ENCODE measurements at regions of chr1 and their contacts with region 1.

Region 1: DNA sequence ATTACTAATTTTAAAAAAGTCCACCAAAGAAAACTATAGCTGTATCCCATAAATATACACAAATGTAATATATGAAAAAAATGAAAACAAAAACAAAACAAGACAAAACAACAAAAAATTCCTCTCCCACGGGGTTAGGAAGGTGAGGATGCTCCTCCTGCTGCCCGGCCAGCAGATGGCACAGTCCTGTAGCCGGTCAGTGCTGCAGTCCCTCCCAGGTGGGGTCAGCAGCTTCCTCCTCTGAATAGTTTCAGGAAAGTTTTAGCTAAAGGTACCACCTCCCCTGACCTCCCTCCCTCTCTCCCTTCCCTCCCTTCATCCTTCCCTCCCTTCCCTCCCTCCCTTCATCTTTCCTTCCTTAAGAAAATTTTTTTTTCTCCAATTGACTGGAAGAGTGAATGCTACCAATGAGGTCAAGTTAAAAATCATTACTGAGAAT is 67.8 kb upstream of the BCL10 start:
- DNase-seq: peak; percentile 78
- H3K4me3 Mint-ChIP-seq: peak overlapping the region; percentile 39
- H3K27ac Mint-ChIP-seq: peak overlapping the region; percentile 96
- H3K4me1 Mint-ChIP-seq: peaks cover 79% of the 10 kb centered on the region
- H3K27me3 Mint-ChIP-seq: no peaks in the 10 kb centered on the region
- CTCF ChIP-seq: peak; percentile 75

Region 2: DNA sequence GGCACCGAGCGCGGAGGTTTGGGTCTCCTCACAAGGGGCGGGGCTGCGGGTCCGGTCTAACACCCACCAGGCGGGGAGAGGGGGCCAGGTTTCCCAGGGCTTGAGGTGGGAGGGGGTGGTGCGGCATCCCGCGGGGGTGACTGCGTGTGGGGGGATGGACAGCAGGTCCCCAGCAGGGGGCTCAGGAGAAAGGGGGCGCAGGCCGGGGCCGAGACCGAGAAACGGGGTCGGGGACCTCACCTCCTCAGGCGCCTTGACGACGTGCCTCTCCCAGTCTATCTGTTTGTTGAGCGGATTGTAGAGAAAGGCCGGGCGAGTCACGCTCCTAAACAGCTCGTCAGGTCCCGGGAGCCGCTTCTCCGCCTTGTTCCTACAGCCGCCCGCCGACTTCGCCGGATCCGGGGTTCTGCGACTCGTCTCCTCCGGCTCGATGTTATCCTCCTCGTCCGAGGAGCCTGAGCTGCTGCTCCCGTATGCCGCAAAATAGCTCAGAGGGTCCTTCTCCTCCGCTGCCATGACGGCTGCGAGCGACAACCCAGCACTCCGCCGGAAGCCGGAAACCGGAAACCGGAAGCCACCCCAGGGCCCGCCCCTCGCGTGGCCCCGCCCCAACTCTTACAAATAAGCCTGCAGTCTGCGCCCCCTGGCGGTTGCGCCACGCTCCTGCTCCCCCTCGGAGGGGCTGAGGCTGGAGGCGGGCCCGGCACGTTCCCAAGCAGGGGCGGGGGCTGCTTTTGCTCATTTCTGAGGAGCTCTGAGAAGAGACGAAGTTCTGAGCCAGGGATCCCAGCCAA is 85.0 kb before region 1 on chr1 and contains the start of gene C1orf52:
- CTCF ChIA-PET with region 1: no interaction called
- intact Hi-C with region 1: no loop called
- DNase-seq: peak; percentile 98
- H3K4me3 Mint-ChIP-seq: peak within 1 kb of the TSS; percentile 98
- H3K27ac Mint-ChIP-seq: peak within 1 kb of the TSS; percentile 66
- H3K4me1 Mint-ChIP-seq: peaks cover 31% of the 10 kb centered on the region
- H3K27me3 Mint-ChIP-seq: no peaks in the 10 kb centered on the region
- CTCF ChIP-seq: peak; percentile 95
- total RNA-seq, gene C1orf52: 29.7 TPM in 2 replicates

Region 3: GRCh38 chr1:85283475-85284199 is 60.6 kb before region 1 on chr1:
- CTCF ChIA-PET with region 1: no interaction called
- intact Hi-C with region 1: no loop called
- DNase-seq: peak; percentile 37
- H3K4me3 Mint-ChIP-seq: no peak overlapping the region
- H3K27ac Mint-ChIP-seq: no peak overlapping the region
- H3K4me1 Mint-ChIP-seq: peaks cover 32% of the 10 kb centered on the region
- H3K27me3 Mint-ChIP-seq: no peaks in the 10 kb centered on the region
- CTCF ChIP-seq: no peak

Region 4: DNA sequence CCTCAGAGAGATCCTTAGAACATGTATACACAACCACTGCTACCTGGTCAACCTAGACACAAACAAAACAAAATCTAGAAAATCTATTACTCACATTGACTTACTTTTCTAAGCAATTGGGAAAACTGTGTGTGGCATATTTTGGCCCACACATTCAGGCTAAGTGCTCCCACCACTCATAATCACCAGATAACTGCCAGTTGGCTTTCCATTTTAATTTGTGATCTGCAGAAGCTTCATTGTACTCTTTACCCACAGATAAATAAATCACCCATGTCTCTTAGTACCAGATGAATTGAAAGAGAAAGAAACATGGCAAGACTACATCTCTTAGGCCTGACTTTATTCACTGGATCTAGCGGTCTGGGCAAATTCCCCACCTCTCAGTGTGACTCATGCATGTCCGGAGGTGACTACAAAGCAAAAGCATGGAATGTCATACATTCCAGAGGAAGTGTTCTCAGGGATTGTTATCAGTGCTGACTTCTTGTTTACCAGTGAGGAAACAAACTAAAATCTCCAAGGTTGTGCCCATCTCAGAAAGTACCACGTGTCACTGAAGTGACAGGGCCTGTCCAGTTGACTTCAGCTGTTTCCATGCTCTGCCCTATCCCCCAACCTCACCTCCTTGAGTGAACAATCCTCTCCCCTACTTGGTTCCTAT is 15.4 kb before region 1 on chr1:
- CTCF ChIA-PET with region 1: interaction called, 9 read pairs
- intact Hi-C with region 1: loop called (anchors 2 kb)
- DNase-seq: peak; percentile 67
- H3K4me3 Mint-ChIP-seq: no peak overlapping the region
- H3K27ac Mint-ChIP-seq: peak overlapping the region; percentile 90
- H3K4me1 Mint-ChIP-seq: peaks cover 86% of the 10 kb centered on the region
- H3K27me3 Mint-ChIP-seq: no peaks in the 10 kb centered on the region
- CTCF ChIP-seq: no peak

Region 5: GRCh38 chr1:85398391-85399064 is 54.3 kb after region 1 on chr1:
- CTCF ChIA-PET with region 1: interaction called, 7 read pairs
- intact Hi-C with region 1: loop called (anchors 1 kb)
- DNase-seq: no peak
- H3K4me3 Mint-ChIP-seq: no peak overlapping the region
- H3K27ac Mint-ChIP-seq: no peak overlapping the region
- H3K4me1 Mint-ChIP-seq: peaks cover 36% of the 10 kb centered on the region
- H3K27me3 Mint-ChIP-seq: no peaks in the 10 kb centered on the region
- CTCF ChIP-seq: no peak

Region 6: GRCh38 chr1:85406887-85407533 is 62.7 kb after region 1 on chr1:
- CTCF ChIA-PET with region 1: interaction called, 15 read pairs
- intact Hi-C with region 1: no loop called
- DNase-seq: peak; percentile 30
- H3K4me3 Mint-ChIP-seq: peak overlapping the region; percentile 58
- H3K27ac Mint-ChIP-seq: peak overlapping the region; percentile 45
- H3K4me1 Mint-ChIP-seq: peaks cover 57% of the 10 kb centered on the region
- H3K27me3 Mint-ChIP-seq: no peaks in the 10 kb centered on the region
- CTCF ChIP-seq: no peak

Region 7: DNA sequence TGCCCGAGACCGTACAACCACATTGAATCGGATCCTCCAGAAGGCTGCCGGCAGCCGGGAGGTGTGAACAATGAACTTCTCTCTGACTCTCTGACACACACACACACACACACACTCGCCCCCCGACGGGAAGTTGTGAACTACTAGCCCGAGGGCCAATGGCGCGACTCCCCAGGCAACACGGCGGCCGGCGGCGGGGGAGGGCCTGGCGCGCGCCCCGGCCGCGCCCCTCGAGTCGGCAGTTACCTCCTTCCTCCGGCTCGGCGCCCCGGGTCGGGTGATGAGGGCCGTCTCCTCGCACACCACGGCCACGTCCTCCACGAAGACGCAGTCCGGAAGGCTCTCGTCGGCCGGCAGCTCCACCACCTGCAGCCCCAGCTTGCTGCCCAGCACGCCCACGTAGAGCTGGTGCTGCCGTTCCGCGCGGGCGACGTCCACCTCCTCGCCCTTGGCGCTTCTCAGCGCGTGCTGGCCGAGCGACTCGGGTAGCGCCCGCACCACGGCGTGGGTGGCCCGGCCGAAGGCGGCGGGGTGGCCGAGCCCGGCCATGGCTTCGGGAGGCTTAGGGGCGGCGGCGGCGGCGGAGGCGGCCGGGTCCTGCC is 120.3 kb after region 1 on chr1:
- CTCF ChIA-PET with region 1: interaction called, 7 read pairs
- intact Hi-C with region 1: loop called (anchors 5 kb)
- DNase-seq: peak; percentile 86
- H3K4me3 Mint-ChIP-seq: peak overlapping the region; percentile 79
- H3K27ac Mint-ChIP-seq: peak overlapping the region; percentile 74
- H3K4me1 Mint-ChIP-seq: peaks cover 34% of the 10 kb centered on the region
- H3K27me3 Mint-ChIP-seq: no peaks in the 10 kb centered on the region
- CTCF ChIP-seq: no peak